CD8-positive, alpha-beta T cell (primary cell): ENCODE measurements at regions of chr4 and their contacts with region 1.

Region 1: DNA sequence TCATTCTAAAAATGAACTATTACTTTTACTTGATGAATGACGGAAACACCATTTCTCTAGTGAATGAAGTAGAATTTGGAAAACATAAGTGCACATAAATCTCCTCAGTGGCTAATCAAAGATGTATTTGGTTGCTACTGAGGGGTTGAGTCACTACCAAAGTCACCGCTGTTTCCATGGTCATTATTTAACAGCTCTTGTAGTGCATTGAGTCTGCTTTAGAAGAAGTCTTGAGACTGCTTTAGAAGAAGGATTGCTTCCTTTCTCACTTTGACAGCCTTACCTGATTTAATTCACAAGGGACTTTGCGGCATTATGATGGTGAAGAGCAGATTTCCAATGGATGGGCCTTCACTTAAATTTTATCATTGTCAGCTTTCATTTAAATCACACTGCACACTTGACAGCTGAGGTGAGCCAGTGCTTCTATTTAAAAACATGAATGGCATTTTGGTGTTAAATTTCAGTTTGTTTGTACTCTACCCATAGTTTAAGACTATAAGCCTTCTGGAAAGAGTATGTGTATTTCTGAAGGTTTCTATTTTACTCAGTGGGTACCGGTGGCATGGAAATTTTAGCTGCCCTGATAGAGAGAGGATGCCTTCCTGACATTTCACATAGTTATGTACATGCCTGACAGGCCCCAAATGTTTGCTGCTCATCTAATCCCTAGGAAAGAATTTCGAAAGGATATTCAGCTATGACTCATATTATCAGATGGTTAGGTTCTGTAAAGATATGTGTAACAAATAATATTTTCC is 9.5 kb downstream of the ASB5 start:
- DNase-seq: no peak
- ATAC-seq: no peak
- H3K4me3 ChIP-seq: no peak overlapping the region
- H3K4me3 Mint-ChIP-seq: no peak overlapping the region
- H3K27ac ChIP-seq: no peak overlapping the region
- H3K27ac Mint-ChIP-seq: no peak overlapping the region
- H3K4me1 ChIP-seq: no peaks in the 10 kb centered on the region
- H3K4me1 Mint-ChIP-seq: no peaks in the 10 kb centered on the region
- H3K27me3 ChIP-seq: no peaks in the 10 kb centered on the region
- H3K27me3 Mint-ChIP-seq: peaks cover 15% of the 10 kb centered on the region
- CTCF ChIP-seq: no peak

Region 2: DNA sequence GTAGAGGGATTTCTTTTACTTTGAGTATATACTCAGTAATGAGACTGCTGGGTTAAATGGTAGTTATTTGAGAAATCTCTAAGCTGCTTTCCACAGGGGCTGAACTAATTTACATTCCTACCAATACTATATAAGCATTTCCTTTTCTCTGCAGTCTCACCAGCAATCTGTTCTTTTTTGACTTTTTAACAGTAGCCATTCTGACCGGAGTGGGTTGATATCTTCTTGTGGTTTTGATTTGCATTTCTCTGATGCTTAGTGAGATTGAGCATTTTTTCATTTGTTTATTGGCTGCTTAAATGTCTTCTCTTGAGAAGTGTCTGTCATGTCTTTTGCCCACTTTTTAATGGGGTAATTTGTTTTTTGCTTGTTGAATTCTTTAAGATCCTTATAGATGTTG is 103.6 kb after region 1 on chr4:
- CTCF ChIA-PET with region 1: no interaction called
- POLR2A ChIA-PET with region 1: no interaction called
- intact Hi-C with region 1: no loop called
- DNase-seq: no peak
- ATAC-seq: no peak
- H3K4me3 ChIP-seq: no peak overlapping the region
- H3K4me3 Mint-ChIP-seq: no peak overlapping the region
- H3K27ac ChIP-seq: no peak overlapping the region
- H3K27ac Mint-ChIP-seq: no peak overlapping the region
- H3K4me1 ChIP-seq: no peaks in the 10 kb centered on the region
- H3K4me1 Mint-ChIP-seq: no peaks in the 10 kb centered on the region
- H3K27me3 ChIP-seq: no peaks in the 10 kb centered on the region
- H3K27me3 Mint-ChIP-seq: peaks cover 12% of the 10 kb centered on the region
- CTCF ChIP-seq: no peak

Region 3: DNA sequence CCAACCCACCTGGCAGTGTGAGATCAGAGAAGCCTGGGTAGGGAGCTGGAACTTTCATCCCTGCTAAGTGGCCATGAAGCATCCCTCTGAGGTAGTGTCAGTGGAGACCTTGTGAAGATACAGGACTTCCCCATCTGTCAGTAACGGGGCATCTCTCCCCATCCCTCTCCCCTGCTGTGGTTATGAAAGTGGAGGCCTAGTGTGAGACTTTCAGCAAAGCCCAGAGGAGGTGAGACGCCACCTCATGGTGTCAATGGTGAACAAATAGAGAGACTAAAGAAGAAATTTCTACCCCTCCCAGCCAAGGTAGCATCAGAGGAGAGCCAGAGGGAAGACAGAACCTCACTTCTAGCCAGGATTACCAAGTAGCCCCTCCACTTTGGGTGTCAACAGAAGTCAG is 383.0 kb after region 1 on chr4:
- CTCF ChIA-PET with region 1: no interaction called
- POLR2A ChIA-PET with region 1: no interaction called
- intact Hi-C with region 1: loop called in 1 of 2 experiments (anchors 10 kb)
- DNase-seq: no peak
- ATAC-seq: no peak
- H3K4me3 ChIP-seq: no peak overlapping the region
- H3K4me3 Mint-ChIP-seq: no peak overlapping the region
- H3K27ac ChIP-seq: no peak overlapping the region
- H3K27ac Mint-ChIP-seq: no peak overlapping the region
- H3K4me1 ChIP-seq: no peaks in the 10 kb centered on the region
- H3K4me1 Mint-ChIP-seq: no peaks in the 10 kb centered on the region
- H3K27me3 ChIP-seq: no peaks in the 10 kb centered on the region
- H3K27me3 Mint-ChIP-seq: no peaks in the 10 kb centered on the region
- CTCF ChIP-seq: no peak